ENCODE measurements at regions of chr17 and their contacts with region 1.

Region 1: DNA sequence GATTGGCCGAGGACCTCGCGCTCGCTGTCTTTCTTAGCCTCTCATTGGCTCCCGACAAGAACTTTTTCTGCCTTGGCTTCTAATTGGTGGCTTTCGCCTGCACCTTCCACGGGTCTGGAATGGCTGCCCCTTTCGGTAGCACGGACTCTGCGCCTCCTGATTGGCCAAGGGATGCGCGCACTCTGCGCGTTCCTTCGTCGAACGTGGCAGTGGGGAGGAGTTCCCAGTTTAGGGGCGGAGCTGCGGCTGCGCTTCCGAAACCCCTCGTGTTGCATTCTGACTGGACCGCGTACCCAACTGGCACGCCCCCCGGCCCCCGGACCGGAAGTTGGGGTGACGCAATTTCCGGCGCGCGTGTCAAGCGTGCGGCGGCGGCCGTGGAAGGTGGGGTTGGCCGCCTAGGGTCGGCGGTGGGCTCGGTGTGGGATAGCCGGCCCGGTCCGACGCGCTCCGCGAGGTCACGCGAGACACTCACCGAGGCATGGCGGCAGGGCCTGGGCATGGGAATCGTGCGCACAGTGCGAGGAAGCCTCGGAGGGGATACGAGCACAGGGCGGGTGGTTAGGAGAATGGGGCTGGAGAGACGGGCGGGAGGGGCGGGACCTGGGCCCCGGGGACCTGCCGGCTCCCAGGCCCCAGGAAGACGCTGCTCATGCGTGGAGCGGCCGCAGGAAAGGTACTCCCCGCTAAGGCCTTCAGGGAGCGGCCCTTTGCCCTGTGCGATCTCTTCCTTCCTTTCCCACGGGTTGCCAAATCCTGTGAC is 602 bp upstream of the P4HB start:
- DNase-seq: peak; percentile 99
- H3K4me3 Mint-ChIP-seq: peak overlapping the region; percentile 93
- H3K27ac Mint-ChIP-seq: peak overlapping the region; percentile 88
- H3K4me1 Mint-ChIP-seq: peaks cover 50% of the 10 kb centered on the region
- H3K27me3 Mint-ChIP-seq: no peaks in the 10 kb centered on the region

Region 2: DNA sequence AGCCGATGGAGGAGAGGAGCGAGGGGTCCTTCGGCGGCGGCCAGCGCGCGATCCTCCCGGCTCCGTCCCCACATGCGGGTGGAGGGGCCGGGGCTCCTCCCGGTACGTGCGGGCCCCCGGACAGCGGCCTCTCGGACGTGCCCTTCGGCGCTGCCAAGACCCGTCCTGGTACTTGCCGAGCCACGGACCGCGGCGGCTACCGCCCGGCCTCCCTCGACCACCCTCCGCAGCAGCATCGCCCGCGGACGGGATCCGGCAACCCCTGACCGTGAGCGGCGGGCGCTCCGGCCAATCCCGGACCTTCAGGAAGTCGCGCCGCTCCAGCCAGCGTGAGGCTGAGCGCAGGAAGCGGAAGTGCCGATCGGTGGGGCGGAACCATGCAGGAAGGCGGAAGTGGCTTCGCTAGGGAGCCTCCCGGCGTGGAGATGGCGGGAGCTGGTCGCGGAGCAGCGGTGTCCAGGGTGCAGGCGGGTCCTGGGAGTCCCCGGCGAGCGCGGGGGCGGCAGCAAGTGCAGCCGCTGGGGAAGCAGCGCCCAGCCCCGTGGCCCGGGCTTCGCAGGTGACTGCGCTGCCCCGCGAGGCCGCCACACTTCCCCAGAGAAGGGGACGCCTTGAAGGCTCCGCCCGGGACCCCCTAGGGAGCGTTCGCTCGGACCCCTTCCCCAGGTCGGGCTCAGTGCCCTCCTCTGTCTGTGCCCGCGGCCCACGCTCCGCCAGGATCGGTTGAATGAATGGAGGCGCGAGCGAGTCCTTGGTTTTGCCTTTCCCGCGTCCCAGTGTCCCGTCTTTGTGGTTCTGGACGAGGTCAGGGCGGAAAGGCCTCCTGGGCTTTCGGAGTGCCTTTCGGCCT is 194.4 kb before region 1 on chr17 and contains the starts of genes CCDC137 and OXLD1:
- CTCF ChIA-PET with region 1: no interaction called
- intact Hi-C with region 1: loop called (anchors 2 kb)
- DNase-seq: peak; percentile 97
- H3K4me3 Mint-ChIP-seq: peak within 1 kb of the TSS; percentile 99
- H3K27ac Mint-ChIP-seq: peak within 1 kb of the TSS; percentile 96
- H3K4me1 Mint-ChIP-seq: peaks cover 52% of the 10 kb centered on the region
- H3K27me3 Mint-ChIP-seq: no peaks in the 10 kb centered on the region
- total RNA-seq, gene CCDC137: 30.8 to 32.3 TPM
- total RNA-seq, gene OXLD1: 41.9 to 44.1 TPM

Region 3: GRCh38 chr17:81833160-81833920 is 27.6 kb before region 1 on chr17 and contains the start of gene MCRIP1:
- CTCF ChIA-PET with region 1: no interaction called
- intact Hi-C with region 1: loop called (anchors 1 kb)
- DNase-seq: peak; percentile 95
- H3K4me3 Mint-ChIP-seq: peak within 1 kb of the TSS; percentile 95
- H3K27ac Mint-ChIP-seq: peak within 1 kb of the TSS; percentile 88
- H3K4me1 Mint-ChIP-seq: peaks cover 16% of the 10 kb centered on the region
- H3K27me3 Mint-ChIP-seq: no peaks in the 10 kb centered on the region
- total RNA-seq, gene MCRIP1: 53.7 to 55.6 TPM

Region 4: GRCh38 chr17:81871387-81872230 is 10.7 kb after region 1 on chr17:
- CTCF ChIA-PET with region 1: interaction called, 4 read pairs
- intact Hi-C with region 1: loop called (anchors 1 kb)
- DNase-seq: peak; percentile 96
- H3K4me3 Mint-ChIP-seq: peak overlapping the region; percentile 83
- H3K27ac Mint-ChIP-seq: peak overlapping the region; percentile 94
- H3K4me1 Mint-ChIP-seq: peaks cover 48% of the 10 kb centered on the region
- H3K27me3 Mint-ChIP-seq: no peaks in the 10 kb centered on the region

Region 5: DNA sequence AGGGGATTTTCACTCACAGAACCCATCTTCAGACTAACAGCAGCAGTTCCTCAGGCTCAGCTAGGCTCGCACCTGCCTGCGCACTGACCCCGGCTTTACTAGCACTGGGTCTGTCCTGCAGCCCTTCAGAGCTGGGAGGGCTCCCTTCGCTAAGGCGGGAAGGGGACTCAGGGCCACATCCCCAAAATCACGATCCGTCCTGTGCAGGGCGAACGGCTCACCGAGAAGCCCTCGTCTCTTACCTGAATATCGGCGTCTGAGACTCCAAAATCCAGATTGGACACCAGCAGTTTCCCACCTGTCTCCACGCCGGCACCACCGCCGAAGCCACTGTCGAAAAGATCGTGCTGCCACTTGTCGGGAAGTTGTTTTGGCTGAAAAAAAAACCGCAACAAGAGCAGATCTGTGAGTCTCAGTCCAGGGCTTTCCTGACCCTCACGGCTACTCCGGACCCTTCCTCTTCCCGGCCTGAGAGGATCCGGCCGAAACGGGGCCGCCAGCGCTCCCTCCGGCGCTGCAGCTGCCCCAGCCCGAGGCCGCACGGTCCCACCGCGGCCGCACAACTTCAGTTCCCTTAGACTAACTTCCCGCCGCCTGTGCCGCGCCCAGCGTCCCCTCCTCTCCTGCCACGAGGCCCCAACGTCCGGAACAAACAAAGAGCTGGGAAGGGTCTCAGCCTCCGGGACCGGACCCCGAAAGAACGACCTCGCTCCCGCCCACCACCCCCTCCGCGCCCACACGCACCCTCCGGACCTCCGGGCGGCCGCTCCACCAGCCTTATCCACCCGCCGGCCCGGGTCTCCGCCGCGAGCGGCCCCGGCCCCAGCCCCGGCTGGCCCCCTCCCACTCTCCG is 29.7 kb after region 1 on chr17:
- CTCF ChIA-PET with region 1: interaction called, 3 read pairs
- intact Hi-C with region 1: loop called (anchors 1 kb)
- DNase-seq: peak; percentile 43
- H3K4me3 Mint-ChIP-seq: peak overlapping the region; percentile 85
- H3K27ac Mint-ChIP-seq: peak overlapping the region; percentile 93
- H3K4me1 Mint-ChIP-seq: peaks cover 33% of the 10 kb centered on the region
- H3K27me3 Mint-ChIP-seq: no peaks in the 10 kb centered on the region

Region 6: GRCh38 chr17:81927653-81928543 is 67.0 kb after region 1 on chr17 and contains the start of gene MAFG:
- CTCF ChIA-PET with region 1: no interaction called
- intact Hi-C with region 1: loop called (anchors 2 kb)
- DNase-seq: peak; percentile 88
- H3K4me3 Mint-ChIP-seq: peak within 1 kb of the TSS; percentile 76
- H3K27ac Mint-ChIP-seq: peak within 1 kb of the TSS; percentile 86
- H3K4me1 Mint-ChIP-seq: peaks cover 26% of the 10 kb centered on the region
- H3K27me3 Mint-ChIP-seq: peaks cover 5% of the 10 kb centered on the region
- total RNA-seq, gene MAFG: 13.5 to 14.8 TPM

Region 7: DNA sequence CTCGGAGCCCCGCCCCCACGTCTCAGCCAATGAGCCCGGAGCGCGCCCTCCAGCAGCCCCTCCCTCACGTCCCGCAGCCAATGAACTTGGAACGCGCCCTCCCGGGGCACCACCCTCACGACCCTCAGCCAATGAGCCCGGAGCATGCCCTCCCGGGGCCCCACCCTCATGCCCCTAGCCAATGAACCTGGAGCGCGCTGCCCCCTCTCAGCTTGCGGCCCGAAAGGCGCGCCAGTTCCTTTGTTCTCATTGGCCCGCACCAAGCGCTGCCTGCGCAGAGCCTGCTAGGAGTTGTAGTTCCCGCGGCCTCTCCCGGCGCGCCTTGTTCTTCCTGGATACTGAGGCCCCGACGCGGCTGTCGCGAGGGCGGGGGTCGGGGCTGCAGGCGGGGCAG is 162.0 kb after region 1 on chr17 and contains the start of gene LRRC45:
- CTCF ChIA-PET with region 1: no interaction called
- intact Hi-C with region 1: loop called (anchors 1 kb)
- DNase-seq: peak; percentile 100
- H3K4me3 Mint-ChIP-seq: peak within 1 kb of the TSS; percentile 86
- H3K27ac Mint-ChIP-seq: no peak within 1 kb of the TSS
- H3K4me1 Mint-ChIP-seq: peaks cover 22% of the 10 kb centered on the region
- H3K27me3 Mint-ChIP-seq: no peaks in the 10 kb centered on the region
- total RNA-seq, gene LRRC45: 12.0 to 12.5 TPM